Activated CD4-positive, alpha-beta memory T cell treated with anti-CD3 and anti-CD28 coated beads for 36 hours (primary cell): ENCODE measurements at regions of chr2 and their contacts with region 1.

Region 1: GRCh38 chr2:208265801-208266552 is at the start of gene PIKFYVE:
- DNase-seq: peak; percentile 95
- H3K4me3 Mint-ChIP-seq: peak within 1 kb of the TSS; percentile 89
- H3K27ac Mint-ChIP-seq: peak within 1 kb of the TSS; percentile 98
- H3K4me1 Mint-ChIP-seq: peaks cover 32% of the 10 kb centered on the region
- H3K27me3 Mint-ChIP-seq: no peaks in the 10 kb centered on the region
- total RNA-seq, gene PIKFYVE: 22.4 to 23.7 TPM

Region 2: GRCh38 chr2:207529330-207530159 is 736.4 kb before region 1 on chr2 and contains the start of gene CREB1:
- CTCF ChIA-PET with region 1: no interaction called
- POLR2A ChIA-PET with region 1: no interaction called
- intact Hi-C with region 1: loop called (anchors 2 kb)
- DNase-seq: peak; percentile 100
- H3K4me3 Mint-ChIP-seq: peak within 1 kb of the TSS; percentile 89
- H3K27ac Mint-ChIP-seq: peak within 1 kb of the TSS; percentile 99
- H3K4me1 Mint-ChIP-seq: peaks cover 50% of the 10 kb centered on the region
- H3K27me3 Mint-ChIP-seq: no peaks in the 10 kb centered on the region
- total RNA-seq, gene CREB1: 90.7 to 92.2 TPM

Region 3: GRCh38 chr2:207769597-207770486 is 496.1 kb before region 1 on chr2 and contains the start of gene FZD5:
- CTCF ChIA-PET with region 1: no interaction called
- POLR2A ChIA-PET with region 1: no interaction called
- intact Hi-C with region 1: loop called (anchors 5 kb)
- DNase-seq: peak; percentile 92
- H3K4me3 Mint-ChIP-seq: peak within 1 kb of the TSS; percentile 78
- H3K27ac Mint-ChIP-seq: no peak within 1 kb of the TSS
- H3K4me1 Mint-ChIP-seq: peaks cover 31% of the 10 kb centered on the region
- H3K27me3 Mint-ChIP-seq: peaks cover 30% of the 10 kb centered on the region
- total RNA-seq, gene FZD5: 1.3 to 1.7 TPM

Region 4: GRCh38 chr2:207792244-207792785 is 473.7 kb before region 1 on chr2:
- CTCF ChIA-PET with region 1: no interaction called
- POLR2A ChIA-PET with region 1: no interaction called
- intact Hi-C with region 1: no loop called
- DNase-seq: no peak
- H3K4me3 Mint-ChIP-seq: no peak overlapping the region
- H3K27ac Mint-ChIP-seq: no peak overlapping the region
- H3K4me1 Mint-ChIP-seq: no peaks in the 10 kb centered on the region
- H3K27me3 Mint-ChIP-seq: peaks cover 11% of the 10 kb centered on the region

Region 5: GRCh38 chr2:208254871-208255556 is 11.0 kb before region 1 on chr2 and contains the start of gene IDH1:
- CTCF ChIA-PET with region 1: interaction called, 99 read pairs
- POLR2A ChIA-PET with region 1: interaction called, 14 read pairs
- intact Hi-C with region 1: loop called (anchors 1 kb)
- DNase-seq: peak; percentile 95
- H3K4me3 Mint-ChIP-seq: peak within 1 kb of the TSS; percentile 97
- H3K27ac Mint-ChIP-seq: peak within 1 kb of the TSS; percentile 81
- H3K4me1 Mint-ChIP-seq: peaks cover 15% of the 10 kb centered on the region
- H3K27me3 Mint-ChIP-seq: no peaks in the 10 kb centered on the region
- total RNA-seq, gene IDH1: 30.9 to 32.9 TPM

Region 6: DNA sequence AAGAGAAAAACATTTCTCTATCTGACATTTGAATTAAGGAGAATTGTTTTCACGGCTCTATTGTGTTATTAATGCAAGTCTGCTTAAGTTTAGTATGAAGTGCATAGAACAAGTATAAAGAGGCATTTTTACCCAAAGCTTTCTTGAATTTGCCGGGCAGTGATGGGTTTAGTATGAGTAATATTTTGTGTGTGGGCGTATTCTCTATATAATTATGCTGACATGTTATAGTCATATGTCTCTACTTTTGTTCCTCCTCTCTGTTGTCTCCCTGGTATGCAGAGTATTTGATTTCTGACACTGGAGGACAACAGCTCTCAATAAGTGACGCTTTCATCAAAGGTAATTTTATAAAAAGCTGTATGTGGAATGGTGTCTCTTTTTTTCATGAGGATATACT is 46.0 kb after region 1 on chr2:
- CTCF ChIA-PET with region 1: interaction called, 6 read pairs
- POLR2A ChIA-PET with region 1: no interaction called
- intact Hi-C with region 1: loop called (anchors 1 kb)
- DNase-seq: no peak
- H3K4me3 Mint-ChIP-seq: no peak overlapping the region
- H3K27ac Mint-ChIP-seq: peak overlapping the region; percentile 21
- H3K4me1 Mint-ChIP-seq: peaks cover 21% of the 10 kb centered on the region
- H3K27me3 Mint-ChIP-seq: no peaks in the 10 kb centered on the region

Region 7: GRCh38 chr2:210002158-210003157 is 1736.5 kb after region 1 on chr2 and contains the start of gene RPE:
- CTCF ChIA-PET with region 1: no interaction called
- POLR2A ChIA-PET with region 1: no interaction called
- intact Hi-C with region 1: loop called (anchors 2 kb)
- DNase-seq: peak; percentile 98
- H3K4me3 Mint-ChIP-seq: peak within 1 kb of the TSS; percentile 96
- H3K27ac Mint-ChIP-seq: peak within 1 kb of the TSS; percentile 81
- H3K4me1 Mint-ChIP-seq: peaks cover 51% of the 10 kb centered on the region
- H3K27me3 Mint-ChIP-seq: peaks cover 3% of the 10 kb centered on the region
- total RNA-seq, gene RPE: 46.3 to 48.0 TPM